A673 (cell line): ENCODE measurements at regions of chr5 and their contacts with region 1.

Region 1: GRCh38 chr5:179907570-179908324 is at the start of gene TBC1D9B:
- DNase-seq: peak; percentile 68
- H3K4me3 ChIP-seq: peak within 1 kb of the TSS; percentile 62
- H3K27ac ChIP-seq: no peak within 1 kb of the TSS
- H3K4me1 ChIP-seq: peaks cover 7% of the 10 kb centered on the region
- H3K27me3 ChIP-seq: no peaks in the 10 kb centered on the region
- CTCF ChIP-seq: no peak; the same call in 1 of the 2 replicates
- total RNA-seq, gene TBC1D9B: 68.2 and 77.0 TPM in 2 replicates

Region 2: DNA sequence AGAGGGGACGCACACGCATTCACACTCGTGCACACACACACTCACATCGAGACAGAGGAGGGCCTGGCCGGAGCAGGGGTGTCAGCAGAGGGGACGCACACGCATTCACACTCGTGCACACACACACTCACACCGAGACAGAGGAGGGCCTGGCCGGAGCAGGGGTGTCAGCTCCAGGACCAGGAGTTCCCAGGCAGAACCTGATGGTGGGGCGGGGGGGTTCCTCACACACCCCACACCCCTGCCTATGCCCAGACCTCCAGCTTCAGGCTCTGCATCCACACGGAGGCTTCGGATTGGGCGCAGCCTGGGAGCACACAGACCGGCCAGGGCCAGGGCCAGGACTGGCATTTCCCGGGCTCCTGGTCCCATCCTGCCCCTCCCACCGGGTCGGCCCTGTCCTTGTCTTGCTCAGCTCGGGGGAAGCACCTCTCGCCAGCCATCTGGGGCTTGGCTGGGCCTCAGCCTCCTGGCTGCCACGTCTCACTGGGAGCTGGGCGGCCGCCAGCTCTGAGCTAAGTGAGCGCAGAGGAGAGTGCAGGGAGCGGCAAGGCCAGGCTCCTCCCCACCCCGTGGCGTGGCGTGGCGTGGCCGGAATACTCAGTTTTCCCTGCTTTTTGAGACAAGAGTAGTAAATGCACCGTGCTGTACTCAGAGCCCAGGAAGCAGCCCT is 593.8 kb before region 1 on chr5:
- CTCF ChIA-PET with region 1: no interaction called
- POLR2A ChIA-PET with region 1: no interaction called
- intact Hi-C with region 1: no loop called
- DNase-seq: no peak
- H3K4me3 ChIP-seq: no peak overlapping the region
- H3K27ac ChIP-seq: no peak overlapping the region
- H3K4me1 ChIP-seq: no peaks in the 10 kb centered on the region
- H3K27me3 ChIP-seq: no peaks in the 10 kb centered on the region
- CTCF ChIP-seq: no peak

Region 3: GRCh38 chr5:179793468-179794139 is 114.1 kb before region 1 on chr5 and contains the start of gene LTC4S:
- CTCF ChIA-PET with region 1: no interaction called
- POLR2A ChIA-PET with region 1: no interaction called
- intact Hi-C with region 1: no loop called
- DNase-seq: no peak
- H3K4me3 ChIP-seq: no peak within 1 kb of the TSS
- H3K27ac ChIP-seq: no peak within 1 kb of the TSS
- H3K4me1 ChIP-seq: no peaks in the 10 kb centered on the region
- H3K27me3 ChIP-seq: no peaks in the 10 kb centered on the region
- CTCF ChIP-seq: no peak
- total RNA-seq, gene LTC4S: 0.58 and 1.5 TPM in 2 replicates

Region 4: DNA sequence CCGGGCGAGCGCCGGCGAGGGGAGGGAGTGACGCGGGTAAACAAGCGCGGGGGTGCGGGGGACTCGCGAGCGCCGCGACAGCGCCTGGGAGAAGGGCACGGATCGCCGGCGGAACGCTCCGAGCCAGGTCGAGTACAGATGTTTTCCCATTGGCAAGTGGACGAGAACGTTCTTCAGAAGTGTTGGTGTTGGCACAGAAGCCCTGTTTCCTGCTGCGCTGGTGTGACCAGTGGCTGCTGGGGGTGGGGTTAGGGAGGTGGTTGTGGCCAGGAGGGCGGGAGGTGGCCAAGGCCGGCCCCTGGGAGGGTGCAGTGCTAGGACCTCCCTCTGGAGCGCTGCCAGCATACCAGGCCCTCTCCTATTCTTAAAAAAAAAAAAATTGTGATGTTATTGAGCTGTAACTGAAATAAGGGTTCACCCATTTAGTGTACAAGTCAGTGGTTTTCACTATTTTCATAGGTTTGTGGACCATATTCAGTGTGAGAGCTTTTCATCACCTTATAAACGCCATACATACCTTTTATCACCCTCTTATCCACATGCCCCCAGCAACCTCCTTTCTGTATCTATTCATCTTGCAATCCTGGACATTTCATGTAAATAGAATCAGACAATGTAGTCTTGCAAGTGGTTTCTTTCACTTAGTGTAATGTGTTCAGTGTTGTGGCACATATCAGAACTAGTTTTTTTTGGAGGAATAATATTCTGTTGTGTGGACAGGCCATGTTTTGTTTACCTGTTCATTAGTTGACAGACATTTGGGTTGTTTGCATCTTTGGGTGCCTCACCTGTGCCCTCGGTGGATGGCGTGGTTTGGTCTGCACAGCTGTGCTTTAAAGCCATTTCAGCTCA is 85.9 kb before region 1 on chr5:
- CTCF ChIA-PET with region 1: no interaction called
- POLR2A ChIA-PET with region 1: no interaction called
- intact Hi-C with region 1: loop called (anchors 5 kb)
- DNase-seq: peak; percentile 62
- H3K4me3 ChIP-seq: peak overlapping the region; percentile 88
- H3K27ac ChIP-seq: peak overlapping the region; percentile 93
- H3K4me1 ChIP-seq: peaks cover 16% of the 10 kb centered on the region
- H3K27me3 ChIP-seq: no peaks in the 10 kb centered on the region
- CTCF ChIP-seq: 0 out of 2 replicates have a peak, but pooled peaks have one; percentile 9

Region 5: GRCh38 chr5:179836225-179837019 is 71.3 kb before region 1 on chr5:
- CTCF ChIA-PET with region 1: no interaction called
- POLR2A ChIA-PET with region 1: no interaction called
- intact Hi-C with region 1: no loop called
- DNase-seq: no peak
- H3K4me3 ChIP-seq: no peak overlapping the region
- H3K27ac ChIP-seq: no peak overlapping the region
- H3K4me1 ChIP-seq: no peaks in the 10 kb centered on the region
- H3K27me3 ChIP-seq: no peaks in the 10 kb centered on the region
- CTCF ChIP-seq: no peak

Region 6: DNA sequence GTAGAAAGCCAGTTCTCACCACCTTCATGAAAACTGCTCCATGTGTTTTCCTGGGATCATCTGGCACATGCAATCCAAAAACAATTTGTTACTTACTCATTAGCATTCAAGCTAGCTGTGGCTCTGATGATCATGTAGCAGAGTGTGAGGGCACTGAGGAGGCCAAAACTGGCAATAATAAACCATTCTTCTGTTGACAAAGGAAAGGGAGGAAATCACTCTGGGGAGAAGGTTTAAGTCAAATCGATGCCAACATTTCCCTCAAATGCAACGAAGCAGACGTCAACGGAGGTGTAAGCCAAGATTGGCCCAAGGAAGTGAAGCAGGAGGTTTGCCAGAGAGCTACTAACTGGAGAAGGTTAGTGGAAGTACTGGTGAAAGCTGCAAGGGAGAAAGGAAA is 55.6 kb after region 1 on chr5:
- CTCF ChIA-PET with region 1: no interaction called
- POLR2A ChIA-PET with region 1: no interaction called
- intact Hi-C with region 1: no loop called
- DNase-seq: no peak
- H3K4me3 ChIP-seq: no peak overlapping the region
- H3K27ac ChIP-seq: no peak overlapping the region
- H3K4me1 ChIP-seq: no peaks in the 10 kb centered on the region
- H3K27me3 ChIP-seq: no peaks in the 10 kb centered on the region
- CTCF ChIP-seq: no peak